ENCODE measurements at regions of chr19 and their contacts with region 1.

Region 1: DNA sequence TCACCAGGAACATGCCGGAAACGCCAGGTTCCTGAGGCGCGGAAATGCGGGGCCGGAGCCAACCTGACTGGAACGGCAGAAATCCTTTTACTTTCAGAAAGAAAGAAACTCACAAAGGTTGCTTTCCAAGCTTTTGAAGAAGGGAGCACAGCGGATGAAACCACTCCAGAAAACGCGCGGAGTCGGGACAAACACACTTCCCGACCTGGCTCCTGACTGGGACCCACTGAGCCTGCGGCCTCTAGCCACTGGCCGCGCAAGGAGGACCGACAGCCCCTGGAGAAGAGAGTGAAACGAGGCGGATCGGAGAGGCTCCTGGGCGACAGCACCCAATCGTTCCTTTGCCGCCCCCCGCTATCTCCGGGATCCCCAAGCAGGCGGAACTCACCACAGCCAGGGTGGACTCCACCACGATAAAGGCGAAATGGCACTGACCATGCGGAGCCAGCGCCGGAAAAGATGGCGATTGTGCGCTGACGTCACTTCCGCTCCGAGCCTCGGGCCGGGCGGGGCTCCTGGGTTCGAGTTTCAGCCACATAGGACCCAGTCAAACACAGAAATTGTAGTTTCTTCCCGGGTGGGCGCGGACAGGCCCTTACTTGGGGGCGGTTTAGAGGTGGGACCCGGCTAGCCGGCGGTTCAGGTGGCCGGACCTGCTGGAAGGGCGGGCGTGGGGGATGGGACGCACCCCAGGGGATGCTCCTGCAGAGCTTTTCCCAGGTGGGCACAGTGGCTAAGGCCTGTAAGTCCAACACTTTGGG is at the start of gene ZNF121:
- DNase-seq: peak; percentile 89
- H3K4me3 ChIP-seq: peak within 1 kb of the TSS; percentile 72
- H3K27ac ChIP-seq: peak within 1 kb of the TSS; percentile 87
- H3K4me1 ChIP-seq: no peaks in the 10 kb centered on the region
- H3K27me3 ChIP-seq: no peaks in the 10 kb centered on the region
- CTCF ChIP-seq: no peak
- total RNA-seq, gene ZNF121: 59.9 and 65.6 TPM in 2 replicates

Region 2: DNA sequence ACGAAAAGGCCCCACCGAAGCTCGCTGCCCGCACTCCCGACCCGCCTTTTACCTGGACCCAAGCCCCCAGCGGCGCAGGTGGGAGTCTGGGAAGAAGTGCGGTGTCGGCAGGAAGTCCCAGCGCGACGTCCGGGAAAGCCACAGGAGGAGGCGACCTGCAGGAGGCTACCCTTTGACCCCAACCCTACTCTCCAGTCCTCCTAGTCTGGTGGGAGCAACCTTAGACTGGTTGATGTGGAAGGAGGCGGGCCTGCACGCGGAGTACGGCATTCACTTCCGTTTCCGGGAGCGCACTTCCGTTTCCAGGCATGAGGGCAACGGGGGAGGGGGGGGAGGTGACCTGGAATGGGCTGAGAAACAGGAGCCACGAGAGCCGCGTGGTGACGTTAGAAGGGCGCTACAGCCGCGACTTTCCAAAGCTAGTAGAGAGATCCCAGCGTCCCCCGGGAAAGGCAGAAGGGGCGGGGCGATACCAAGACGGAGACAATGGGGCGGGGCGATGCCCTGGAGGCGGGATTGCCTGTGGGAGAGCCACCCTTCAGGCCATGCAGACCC is 177.4 kb before region 1 on chr19:
- CTCF ChIA-PET with region 1: no interaction called
- POLR2A ChIA-PET with region 1: no interaction called
- intact Hi-C with region 1: no loop called
- DNase-seq: peak; percentile 88
- H3K4me3 ChIP-seq: peak overlapping the region; percentile 46
- H3K27ac ChIP-seq: no peak overlapping the region
- H3K4me1 ChIP-seq: no peaks in the 10 kb centered on the region
- H3K27me3 ChIP-seq: no peaks in the 10 kb centered on the region
- CTCF ChIP-seq: no peak

Region 3: DNA sequence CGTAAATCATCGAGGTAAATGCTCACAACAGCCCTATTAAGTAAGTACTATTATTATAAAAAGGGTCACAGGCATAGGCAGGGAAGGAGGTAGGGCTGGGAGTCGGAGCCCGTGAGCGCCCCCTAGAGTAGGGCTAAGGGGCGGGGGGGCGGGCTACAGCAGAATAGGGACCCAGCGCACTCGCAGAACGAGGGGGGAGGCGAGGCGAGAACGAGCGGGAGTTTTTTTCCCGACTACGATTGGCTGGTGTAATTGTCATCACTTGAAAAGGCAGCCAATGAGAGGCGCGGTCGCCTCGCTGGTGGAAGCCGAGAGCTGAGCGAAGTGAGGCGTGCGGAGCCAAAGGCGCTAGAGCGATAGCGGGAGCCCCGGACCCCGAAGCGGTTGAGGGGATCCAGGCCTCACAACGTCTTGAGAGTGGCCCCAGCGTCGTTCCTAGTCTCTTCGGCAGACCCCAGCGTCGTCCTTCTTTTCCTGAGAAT is 894.7 kb after region 1 on chr19:
- CTCF ChIA-PET with region 1: interaction called, 10 read pairs
- POLR2A ChIA-PET with region 1: no interaction called
- intact Hi-C with region 1: no loop called
- DNase-seq: peak; percentile 96
- H3K4me3 ChIP-seq: no peak overlapping the region
- H3K27ac ChIP-seq: no peak overlapping the region
- H3K4me1 ChIP-seq: peaks cover 11% of the 10 kb centered on the region
- H3K27me3 ChIP-seq: no peaks in the 10 kb centered on the region
- CTCF ChIP-seq: peak; percentile 67

Measured in A673 (cell line).